H1 (cell line): ENCODE measurements at regions of chr16 and their contacts with region 1.

Region 1: GRCh38 chr16:30534368-30535105 is at the start of gene ZNF747:
- DNase-seq: peak; percentile 70 to 91
- H3K4me3 ChIP-seq: peak within 1 kb of the TSS; percentile 61 to 85 (median 70)
- H3K27ac ChIP-seq: peak within 1 kb of the TSS; percentile 94
- H3K4me1 ChIP-seq: peaks cover 0 to 8% (median 3%) of the 10 kb centered on the region in 4 experiments; a peak in 3 of 7 replicates
- H3K27me3 ChIP-seq: no peaks in the 10 kb centered on the region
- CTCF ChIP-seq: no peak
- EP300 ChIP-seq: no peak
- POLR2A ChIP-seq: peak in 1 of 2 experiments; percentile 81; a peak in 2 of 3 replicates
- RAD21 ChIP-seq: 0 out of 4 replicates have a peak, but pooled peaks of 1 of the 2 experiments have one; percentile 9
- total RNA-seq, gene ZNF747: 10.3 and 12.0 TPM in 2 replicates

Region 2: GRCh38 chr16:30407102-30407803 is 127.3 kb before region 1 on chr16 and contains the start of gene ZNF771:
- CTCF ChIA-PET with region 1: interaction called, 3 read pairs
- POLR2A ChIA-PET with region 1: interaction called, 14 read pairs
- DNase-seq: peak; percentile 78 to 98
- H3K4me3 ChIP-seq: peak within 1 kb of the TSS; percentile 74 to 85 (median 81)
- H3K27ac ChIP-seq: peak within 1 kb of the TSS; percentile 82
- H3K4me1 ChIP-seq: peaks cover 3 to 12% (median 4%) of the 10 kb centered on the region in 4 experiments; a peak in 6 of 7 replicates
- H3K27me3 ChIP-seq: no peaks in the 10 kb centered on the region; a peak in 1 of 7 replicates
- CTCF ChIP-seq: no peak
- EP300 ChIP-seq: no peak
- POLR2A ChIP-seq: peak; percentile 65 to 92
- RAD21 ChIP-seq: 0 out of 4 replicates have a peak, but pooled peaks of 1 of the 2 experiments have one; percentile 7
- total RNA-seq, gene ZNF771: 9.6 and 10.6 TPM in 2 replicates

Region 3: GRCh38 chr16:30445408-30446202 is 88.9 kb before region 1 on chr16 and contains the start of gene SEPHS2:
- CTCF ChIA-PET with region 1: interaction called, 7 read pairs
- POLR2A ChIA-PET with region 1: interaction called, 10 read pairs
- DNase-seq: peak; percentile 96 to 97
- H3K4me3 ChIP-seq: peak within 1 kb of the TSS; percentile 71 to 86 (median 78)
- H3K27ac ChIP-seq: peak within 1 kb of the TSS; percentile 44; the same call in 1 of the 2 replicates
- H3K4me1 ChIP-seq: peaks cover 0 to 9% (median 6%) of the 10 kb centered on the region in 4 experiments; a peak in 5 of 7 replicates
- H3K27me3 ChIP-seq: peaks cover 0 to 4% (median 1%) of the 10 kb centered on the region in 4 experiments; a peak in 1 of 7 replicates
- CTCF ChIP-seq: peak; percentile 28 to 39 (median 33); a peak in 3 of 4 replicates
- EP300 ChIP-seq: no peak
- POLR2A ChIP-seq: peak; percentile 65 to 88
- RAD21 ChIP-seq: no peak; a peak in 2 of 4 replicates
- total RNA-seq, gene SEPHS2: 61.8 and 62.0 TPM in 2 replicates

Region 4: GRCh38 chr16:30557957-30558788 is 23.6 kb after region 1 on chr16 and contains the start of gene ZNF764:
- CTCF ChIA-PET with region 1: interaction called, 23 read pairs
- POLR2A ChIA-PET with region 1: interaction called, 121 read pairs
- DNase-seq: peak; percentile 86 to 88
- H3K4me3 ChIP-seq: peak within 1 kb of the TSS; percentile 58 to 86 (median 76)
- H3K27ac ChIP-seq: peak within 1 kb of the TSS; percentile 60; the same call in 1 of the 2 replicates
- H3K4me1 ChIP-seq: peaks cover 0 to 5% (median 2%) of the 10 kb centered on the region in 4 experiments; a peak in 2 of 7 replicates
- H3K27me3 ChIP-seq: peaks cover 0 to 3% (median 1%) of the 10 kb centered on the region in 4 experiments; a peak in 1 of 7 replicates
- CTCF ChIP-seq: no peak
- EP300 ChIP-seq: no peak
- POLR2A ChIP-seq: peak in 1 of 2 experiments; percentile 23; a peak in 1 of 3 replicates
- RAD21 ChIP-seq: no peak
- total RNA-seq, gene ZNF764: 7.7 and 8.4 TPM in 2 replicates

Region 5: DNA sequence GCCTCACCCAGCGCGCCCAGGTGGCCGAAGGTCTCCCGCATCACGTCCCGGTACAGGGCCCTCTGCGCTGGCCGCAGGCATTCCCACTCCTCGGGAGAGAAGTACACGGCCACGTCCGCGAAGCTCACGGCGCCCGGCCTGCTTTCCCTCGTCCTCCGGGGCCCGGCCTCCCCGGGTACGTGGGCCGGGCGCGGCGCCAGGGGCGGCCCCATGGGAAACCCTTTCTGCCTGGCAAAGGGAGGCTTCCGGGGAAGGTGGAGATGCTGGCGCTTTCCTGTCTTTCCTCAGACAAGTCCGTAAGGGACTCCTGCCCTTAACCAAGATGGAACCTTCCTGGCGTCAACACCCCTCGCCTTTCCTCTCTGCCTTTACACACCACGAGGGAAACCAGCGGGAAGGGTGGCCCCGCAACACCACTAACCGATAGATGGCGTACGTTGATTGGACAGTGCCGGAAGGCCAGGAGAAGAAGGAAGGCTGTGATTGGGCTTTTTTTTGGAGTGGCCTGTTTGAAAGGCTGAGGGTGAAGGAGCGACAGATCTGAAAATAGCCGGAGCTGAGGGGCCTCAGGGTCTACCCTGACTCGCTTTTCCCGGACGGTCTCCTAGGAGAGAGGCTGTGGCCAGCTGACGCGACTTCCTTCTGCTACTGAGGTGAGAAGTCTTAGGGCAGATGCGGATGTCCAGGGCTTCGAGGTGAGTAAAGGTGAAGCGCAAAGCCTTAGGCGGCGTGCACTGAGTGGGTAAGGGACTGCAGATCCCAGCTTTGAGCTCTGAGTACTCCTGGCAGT is 51.1 kb after region 1 on chr16 and contains the start of gene ZNF785:
- CTCF ChIA-PET with region 1: no interaction called
- POLR2A ChIA-PET with region 1: interaction called, 31 read pairs
- DNase-seq: peak; percentile 91 to 93
- H3K4me3 ChIP-seq: peak within 1 kb of the TSS; percentile 78 to 89 (median 84)
- H3K27ac ChIP-seq: peak within 1 kb of the TSS; percentile 86
- H3K4me1 ChIP-seq: no peaks in the 10 kb centered on the region; a peak in 3 of 7 replicates
- H3K27me3 ChIP-seq: no peaks in the 10 kb centered on the region
- CTCF ChIP-seq: peak in 2 of 3 experiments; percentile 26 to 29; a peak in 3 of 4 replicates
- EP300 ChIP-seq: peak in 1 of 2 experiments; percentile 73; a peak in 1 of 3 replicates
- POLR2A ChIP-seq: peak; percentile 12 to 43; a peak in 2 of 3 replicates
- RAD21 ChIP-seq: peak; percentile 6 to 20; a peak in 3 of 4 replicates
- total RNA-seq, gene ZNF785: 12.9 and 14.8 TPM in 2 replicates

Region 6: DNA sequence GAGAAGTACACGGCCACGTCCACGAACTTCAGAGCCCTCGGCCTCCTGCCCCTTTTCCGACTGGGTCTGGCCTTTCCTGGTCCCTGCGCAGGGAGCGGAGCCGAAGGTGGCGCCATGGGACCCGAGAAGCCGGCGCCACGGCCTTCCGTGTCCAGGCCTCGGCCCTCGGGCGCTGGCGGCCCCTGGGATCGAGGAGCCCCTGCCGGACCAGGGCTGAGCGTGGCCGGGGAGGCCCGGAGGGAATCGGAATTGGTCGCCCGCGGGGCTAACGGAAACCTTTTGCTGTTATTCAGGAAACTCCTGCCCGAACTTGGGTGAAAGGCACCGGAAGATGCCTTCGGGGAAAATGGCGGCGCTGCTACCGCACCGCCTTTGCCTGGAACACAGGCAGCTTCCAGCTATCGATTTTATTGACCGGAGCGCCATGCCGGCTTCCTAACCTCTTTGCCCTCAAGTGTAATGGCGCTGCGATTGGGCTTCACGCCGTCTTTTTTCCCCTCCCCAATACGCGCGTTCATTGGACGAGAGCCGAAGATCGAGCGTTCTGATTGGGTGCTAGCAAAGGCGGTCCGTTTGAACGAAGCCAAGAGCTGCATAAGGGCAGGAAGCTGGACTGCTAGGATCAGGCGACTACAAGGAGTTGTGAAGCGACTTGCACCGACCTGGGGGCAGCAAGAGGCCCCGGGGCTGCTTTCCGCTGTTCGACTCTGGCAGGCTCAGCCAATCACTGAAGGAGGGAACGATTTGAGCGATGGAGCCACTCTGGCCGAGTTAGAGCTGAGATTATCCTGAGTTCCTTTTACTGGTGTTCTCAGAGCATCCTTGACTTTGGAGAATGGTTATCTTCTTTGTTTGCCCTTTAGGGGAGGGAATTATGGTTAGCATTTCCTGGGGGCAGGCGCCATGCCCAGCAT is 75.6 kb after region 1 on chr16 and contains the start of gene ZNF689:
- CTCF ChIA-PET with region 1: interaction called, 12 read pairs
- POLR2A ChIA-PET with region 1: interaction called, 32 read pairs
- DNase-seq: peak; percentile 98 to 99
- H3K4me3 ChIP-seq: peak within 1 kb of the TSS; percentile 88 to 98 (median 92)
- H3K27ac ChIP-seq: peak within 1 kb of the TSS; percentile 95
- H3K4me1 ChIP-seq: peaks cover 0 to 3% (median 2%) of the 10 kb centered on the region in 4 experiments; a peak in 3 of 7 replicates
- H3K27me3 ChIP-seq: no peaks in the 10 kb centered on the region
- CTCF ChIP-seq: no peak
- EP300 ChIP-seq: no peak
- POLR2A ChIP-seq: peak; percentile 78 to 86
- RAD21 ChIP-seq: 0 out of 4 replicates have a peak, but pooled peaks of 1 of the 2 experiments have one; percentile 1
- total RNA-seq, gene ZNF689: 14.2 and 14.3 TPM in 2 replicates